ENCODE measurements at regions of chr5 and their contacts with region 1.

Region 1: DNA sequence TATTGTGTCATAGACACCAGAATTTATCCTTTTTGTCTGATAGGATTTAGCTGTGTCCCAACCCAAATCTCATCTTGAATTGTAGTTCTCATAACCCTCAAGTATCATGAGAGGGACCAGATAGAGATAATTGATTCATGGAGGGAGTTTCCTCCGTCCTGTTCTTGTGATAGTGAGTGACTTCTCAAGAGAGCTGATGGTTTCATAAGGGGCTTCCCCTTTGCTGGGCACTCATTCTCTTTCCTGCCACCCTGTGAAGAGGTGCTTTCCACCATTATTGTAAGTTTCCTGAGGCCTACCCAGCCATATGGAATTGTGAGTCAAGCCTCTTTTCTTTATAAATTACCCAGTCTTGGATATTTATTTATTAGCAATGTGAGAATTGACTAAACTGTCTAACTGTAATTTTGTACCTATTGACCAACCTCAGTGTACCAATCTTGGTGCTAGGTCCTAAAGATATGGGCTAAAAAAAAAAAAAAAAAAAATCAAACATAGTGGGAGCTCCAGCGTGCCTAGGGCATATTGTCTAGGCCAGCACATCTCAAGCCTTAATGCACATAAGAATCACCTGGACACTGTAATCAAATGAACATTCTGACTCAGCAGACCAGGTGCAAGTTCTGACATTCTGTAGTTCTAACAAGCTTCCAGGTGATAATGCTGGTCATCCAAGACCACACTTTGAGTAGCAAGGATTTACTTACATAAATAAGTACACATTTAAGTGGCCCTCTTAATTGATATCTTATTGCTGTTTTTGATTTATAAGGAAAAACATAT is 30.5 kb downstream of the ST8SIA4 start:
- DNase-seq: no peak
- H3K4me3 Mint-ChIP-seq: no peak overlapping the region
- H3K27ac Mint-ChIP-seq: peak overlapping the region; percentile 56
- H3K4me1 Mint-ChIP-seq: peaks cover 48% of the 10 kb centered on the region
- H3K27me3 Mint-ChIP-seq: no peaks in the 10 kb centered on the region

Region 2: DNA sequence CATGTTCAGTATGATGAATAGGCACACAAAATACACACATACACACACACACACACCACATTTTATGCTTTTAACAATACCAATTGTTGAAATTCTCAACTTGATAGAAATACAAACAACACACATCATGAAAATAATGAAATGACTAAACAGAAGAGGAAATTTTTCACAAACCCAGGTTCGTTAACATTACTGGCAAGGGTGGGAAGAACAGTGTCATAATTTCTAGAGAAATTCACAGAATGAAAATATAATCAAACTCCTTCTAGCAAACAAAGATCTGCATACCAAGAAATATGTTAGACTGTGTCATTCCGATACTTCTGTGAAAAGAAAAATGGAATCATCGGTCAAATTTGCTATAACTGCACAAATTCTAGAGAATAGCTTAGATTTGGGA is 11.5 kb before region 1 on chr5:
- intact Hi-C with region 1: loop called (anchors 1 kb)
- DNase-seq: no peak
- H3K4me3 Mint-ChIP-seq: peak overlapping the region; percentile 77
- H3K27ac Mint-ChIP-seq: peak overlapping the region; percentile 97
- H3K4me1 Mint-ChIP-seq: peaks cover 64% of the 10 kb centered on the region
- H3K27me3 Mint-ChIP-seq: no peaks in the 10 kb centered on the region